Activated T-helper 2 cell treated with anti-CD3 and anti-CD28 coated beads, Interferon-gamma antibody, Interleukin-2, Interleukin-4, amounts not matched to agents 10 μg/mL and 5 μg/mL and 100 μg/mL, durations not matched to agents 14 hours and 24 hours and 36 hours (primary cell): ENCODE measurements at regions of chr22 and their contacts with region 1.

Region 1: GRCh38 chr22:39532215-39533071 is at the start of gene RPS19BP1:
- DNase-seq: peak; percentile 99
- H3K4me3 Mint-ChIP-seq: peak within 1 kb of the TSS; percentile 96
- H3K27ac Mint-ChIP-seq: peak within 1 kb of the TSS; percentile 90
- H3K4me1 Mint-ChIP-seq: peaks cover 44% of the 10 kb centered on the region
- H3K27me3 Mint-ChIP-seq: no peaks in the 10 kb centered on the region
- total RNA-seq, gene RPS19BP1: 76.9 and 78.4 TPM in 2 replicates

Region 2: GRCh38 chr22:39496131-39496838 is 36.2 kb before region 1 on chr22:
- intact Hi-C with region 1: loop called (anchors 1 kb)
- DNase-seq: peak; percentile 43
- H3K4me3 Mint-ChIP-seq: no peak overlapping the region
- H3K27ac Mint-ChIP-seq: no peak overlapping the region
- H3K4me1 Mint-ChIP-seq: peaks cover 8% of the 10 kb centered on the region
- H3K27me3 Mint-ChIP-seq: no peaks in the 10 kb centered on the region

Region 3: GRCh38 chr22:39520054-39520891 is 12.2 kb before region 1 on chr22 and contains the start of gene ATF4:
- intact Hi-C with region 1: loop called (anchors 1 kb)
- DNase-seq: peak; percentile 97
- H3K4me3 Mint-ChIP-seq: peak within 1 kb of the TSS; percentile 96
- H3K27ac Mint-ChIP-seq: peak within 1 kb of the TSS; percentile 98
- H3K4me1 Mint-ChIP-seq: peaks cover 48% of the 10 kb centered on the region
- H3K27me3 Mint-ChIP-seq: no peaks in the 10 kb centered on the region
- total RNA-seq, gene ATF4: 339 and 348 TPM in 2 replicates

Region 4: GRCh38 chr22:39634671-39635405 is 102.4 kb after region 1 on chr22:
- intact Hi-C with region 1: no loop called
- DNase-seq: no peak
- H3K4me3 Mint-ChIP-seq: no peak overlapping the region
- H3K27ac Mint-ChIP-seq: no peak overlapping the region
- H3K4me1 Mint-ChIP-seq: peaks cover 11% of the 10 kb centered on the region
- H3K27me3 Mint-ChIP-seq: peaks cover 8% of the 10 kb centered on the region

Region 5: GRCh38 chr22:39932918-39933649 is 400.6 kb after region 1 on chr22:
- intact Hi-C with region 1: loop called (anchors 5 kb)
- DNase-seq: peak; percentile 54
- H3K4me3 Mint-ChIP-seq: peak overlapping the region; percentile 75
- H3K27ac Mint-ChIP-seq: peak overlapping the region; percentile 89
- H3K4me1 Mint-ChIP-seq: peaks cover 52% of the 10 kb centered on the region
- H3K27me3 Mint-ChIP-seq: no peaks in the 10 kb centered on the region

Region 6: GRCh38 chr22:40044102-40044869 is 511.8 kb after region 1 on chr22:
- intact Hi-C with region 1: loop called (anchors 2 kb)
- DNase-seq: peak; percentile 99
- H3K4me3 Mint-ChIP-seq: peak overlapping the region; percentile 98
- H3K27ac Mint-ChIP-seq: peak overlapping the region; percentile 100
- H3K4me1 Mint-ChIP-seq: peaks cover 27% of the 10 kb centered on the region
- H3K27me3 Mint-ChIP-seq: peaks cover 6% of the 10 kb centered on the region

Region 7: GRCh38 chr22:40346178-40347118 is 814.0 kb after region 1 on chr22 and contains the start of gene ADSL:
- intact Hi-C with region 1: loop called (anchors 1 kb)
- DNase-seq: peak; percentile 83
- H3K4me3 Mint-ChIP-seq: peak within 1 kb of the TSS; percentile 96
- H3K27ac Mint-ChIP-seq: peak within 1 kb of the TSS; percentile 98
- H3K4me1 Mint-ChIP-seq: peaks cover 37% of the 10 kb centered on the region
- H3K27me3 Mint-ChIP-seq: no peaks in the 10 kb centered on the region
- total RNA-seq, gene ADSL: 142 and 160 TPM in 2 replicates